ENCODE measurements at regions of chr5 and their contacts with region 1.

Region 1: DNA sequence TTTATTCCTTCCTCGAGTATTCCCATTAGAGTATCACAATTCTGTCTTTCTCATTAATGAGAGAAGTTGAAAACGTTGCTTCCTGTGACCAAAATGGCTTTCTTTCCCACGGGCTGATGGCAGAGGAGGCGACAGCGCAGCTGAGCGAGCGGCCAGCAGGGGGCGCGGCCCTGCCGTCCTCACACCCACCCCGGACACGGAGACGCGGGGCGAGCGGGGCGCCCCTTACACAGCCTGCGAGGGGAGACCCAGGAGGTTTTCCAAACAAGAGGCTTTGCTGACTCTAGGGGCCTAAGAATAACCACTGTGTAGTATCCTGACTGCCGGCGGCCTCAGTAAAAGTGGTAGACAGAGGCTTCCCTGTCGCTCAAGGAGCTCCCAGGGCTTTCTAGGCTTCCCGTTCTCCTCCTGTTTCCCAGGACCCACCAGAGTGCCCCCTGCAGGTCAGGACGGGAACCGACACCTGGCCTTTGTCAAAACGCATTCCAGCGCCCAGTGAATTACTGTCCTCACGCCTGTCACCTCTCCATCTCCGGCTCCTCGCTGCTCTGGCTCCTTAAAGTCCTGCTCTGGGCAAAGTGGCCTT is 27.3 kb upstream of the FGF1 start:
- DNase-seq: peak; percentile 85 to 98
- H3K4me3 ChIP-seq: peak overlapping the region; percentile 27 to 67 (median 62); a peak in 7 of 8 replicates
- H3K27ac ChIP-seq: no peak overlapping the region
- H3K4me1 ChIP-seq: peaks cover under 1 to 16% (median 6%) of the 10 kb centered on the region in 4 experiments; a peak in 6 of 7 replicates
- H3K27me3 ChIP-seq: no peaks in the 10 kb centered on the region
- CTCF ChIP-seq: peak; percentile 75 to 97 (median 89)
- EP300 ChIP-seq: 0 out of 3 replicates have a peak, but pooled peaks of 1 of the 2 experiments have one; percentile 48
- POLR2A ChIP-seq: peak in 1 of 2 experiments; percentile 63; a peak in 2 of 3 replicates
- RAD21 ChIP-seq: peak; percentile 29 to 40; a peak in 3 of 4 replicates

Region 2: GRCh38 chr5:142611154-142611553 is 102.1 kb before region 1 on chr5:
- CTCF ChIA-PET with region 1: interaction called, 12 read pairs
- POLR2A ChIA-PET with region 1: interaction called, 6 read pairs
- DNase-seq: peak; percentile 49 to 93
- H3K4me3 ChIP-seq: no peak overlapping the region
- H3K27ac ChIP-seq: no peak overlapping the region
- H3K4me1 ChIP-seq: no peaks in the 10 kb centered on the region
- H3K27me3 ChIP-seq: no peaks in the 10 kb centered on the region
- CTCF ChIP-seq: peak; percentile 78 to 94 (median 90)
- EP300 ChIP-seq: no peak
- POLR2A ChIP-seq: no peak
- RAD21 ChIP-seq: peak; percentile 92 to 94

Region 3: DNA sequence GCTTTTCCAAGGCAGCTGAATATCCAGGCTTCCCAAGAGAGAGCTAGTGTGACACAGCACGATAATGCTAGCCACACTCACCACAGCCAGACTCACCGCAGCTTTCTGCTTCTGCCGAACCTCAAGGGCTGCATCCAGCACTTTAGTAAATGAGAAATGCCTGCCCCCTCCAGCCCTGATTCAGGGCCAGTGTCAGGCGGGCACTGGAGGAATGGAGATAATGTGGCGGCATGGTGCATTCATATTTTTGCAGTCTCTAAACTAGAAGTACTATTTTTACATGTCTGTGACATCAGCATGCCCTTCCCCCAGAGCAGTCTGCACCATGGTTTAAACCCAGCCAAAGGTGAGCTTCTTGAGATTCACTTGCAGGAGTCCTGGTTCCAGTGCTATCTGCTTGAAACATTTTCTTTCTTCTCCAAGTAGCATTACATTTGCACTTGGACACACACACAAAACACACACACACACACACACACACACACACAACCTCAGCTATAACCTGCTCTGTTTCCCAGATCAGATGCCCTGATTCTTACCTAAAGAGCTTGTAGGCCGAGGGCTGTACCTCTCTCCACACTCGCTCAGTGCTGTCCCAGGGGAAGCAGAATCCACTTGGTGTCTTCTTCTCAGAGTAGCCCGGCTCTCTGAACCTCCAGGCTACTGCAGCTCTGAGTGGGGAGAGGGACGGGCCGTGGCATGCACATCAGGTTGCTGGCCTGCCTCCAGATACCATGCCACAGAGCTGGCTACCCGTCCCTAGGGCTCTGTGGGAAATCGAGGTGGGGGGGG is 27.6 kb before region 1 on chr5 and contains the start of gene FGF1:
- CTCF ChIA-PET with region 1: interaction called, 18 read pairs
- POLR2A ChIA-PET with region 1: no interaction called
- DNase-seq: no peak
- H3K4me3 ChIP-seq: no peak within 1 kb of the TSS
- H3K27ac ChIP-seq: peak within 1 kb of the TSS; percentile 37
- H3K4me1 ChIP-seq: peaks cover 3 to 33% (median 23%) of the 10 kb centered on the region in 4 experiments
- H3K27me3 ChIP-seq: no peaks in the 10 kb centered on the region
- CTCF ChIP-seq: no peak
- EP300 ChIP-seq: no peak
- POLR2A ChIP-seq: no peak
- RAD21 ChIP-seq: no peak
- total RNA-seq, gene FGF1: 0.11 and 0.50 TPM in 2 replicates

Region 4: DNA sequence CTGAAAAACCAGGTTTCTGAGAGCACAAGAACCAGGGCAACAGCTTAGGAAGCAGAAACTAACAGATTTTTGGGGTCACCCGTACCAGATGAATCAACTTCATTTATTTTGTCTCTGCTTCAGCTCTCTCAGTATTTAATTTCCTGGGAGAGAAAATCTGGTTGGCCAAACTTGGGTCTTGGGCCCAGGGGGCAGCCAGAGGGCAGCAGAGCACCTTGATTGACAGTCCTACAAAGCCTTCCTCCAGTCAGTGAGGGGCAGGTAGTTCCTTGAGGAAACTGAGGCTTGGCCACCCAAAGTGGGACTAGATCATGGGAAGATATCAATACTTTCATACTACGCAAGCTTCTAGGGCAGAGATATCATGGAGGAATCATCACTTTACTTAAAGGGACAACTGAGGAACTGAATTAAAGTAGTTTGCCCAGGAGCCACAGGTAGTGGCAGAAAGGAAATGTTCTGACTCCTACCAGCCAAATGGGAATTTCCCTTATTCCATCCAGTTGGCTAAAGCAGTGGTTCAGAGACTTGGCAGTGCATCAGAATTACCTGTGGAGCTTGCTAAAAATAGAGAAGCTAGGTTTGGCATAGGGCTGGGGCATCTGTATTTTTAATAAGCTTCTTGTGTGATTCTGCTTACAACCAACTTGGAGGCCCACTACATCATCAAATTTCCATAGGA is 35.5 kb after region 1 on chr5:
- CTCF ChIA-PET with region 1: interaction called, 459 read pairs
- POLR2A ChIA-PET with region 1: interaction called, 4 read pairs
- DNase-seq: peak in 1 of 2 experiments; percentile 66
- H3K4me3 ChIP-seq: no peak overlapping the region
- H3K27ac ChIP-seq: no peak overlapping the region
- H3K4me1 ChIP-seq: peaks cover 0 to under 1% (median under 1%) of the 10 kb centered on the region in 4 experiments; a peak in 1 of 7 replicates
- H3K27me3 ChIP-seq: no peaks in the 10 kb centered on the region
- CTCF ChIP-seq: peak; percentile 77 to 95 (median 82)
- EP300 ChIP-seq: no peak
- POLR2A ChIP-seq: no peak
- RAD21 ChIP-seq: peak; percentile 94 to 96

Region 5: GRCh38 chr5:142860270-142860669 is 147.1 kb after region 1 on chr5:
- CTCF ChIA-PET with region 1: interaction called, 28 read pairs
- POLR2A ChIA-PET with region 1: no interaction called
- DNase-seq: no peak
- H3K4me3 ChIP-seq: no peak overlapping the region
- H3K27ac ChIP-seq: no peak overlapping the region
- H3K4me1 ChIP-seq: peaks cover 15 to 33% (median 20%) of the 10 kb centered on the region in 4 experiments
- H3K27me3 ChIP-seq: no peaks in the 10 kb centered on the region
- CTCF ChIP-seq: no peak
- EP300 ChIP-seq: no peak
- POLR2A ChIP-seq: no peak
- RAD21 ChIP-seq: no peak

Region 6: GRCh38 chr5:142906863-142907671 is 193.9 kb after region 1 on chr5:
- CTCF ChIA-PET with region 1: interaction called, 118 read pairs
- POLR2A ChIA-PET with region 1: no interaction called
- DNase-seq: no peak
- H3K4me3 ChIP-seq: no peak overlapping the region
- H3K27ac ChIP-seq: no peak overlapping the region
- H3K4me1 ChIP-seq: peaks cover 0 to 6% (median 3%) of the 10 kb centered on the region in 4 experiments; a peak in 3 of 7 replicates
- H3K27me3 ChIP-seq: no peaks in the 10 kb centered on the region
- CTCF ChIP-seq: no peak
- EP300 ChIP-seq: no peak
- POLR2A ChIP-seq: no peak
- RAD21 ChIP-seq: no peak

Measured in H1 (cell line).